A549 (cell line): ENCODE measurements at regions of chr10 and their contacts with region 1.

Region 1: DNA sequence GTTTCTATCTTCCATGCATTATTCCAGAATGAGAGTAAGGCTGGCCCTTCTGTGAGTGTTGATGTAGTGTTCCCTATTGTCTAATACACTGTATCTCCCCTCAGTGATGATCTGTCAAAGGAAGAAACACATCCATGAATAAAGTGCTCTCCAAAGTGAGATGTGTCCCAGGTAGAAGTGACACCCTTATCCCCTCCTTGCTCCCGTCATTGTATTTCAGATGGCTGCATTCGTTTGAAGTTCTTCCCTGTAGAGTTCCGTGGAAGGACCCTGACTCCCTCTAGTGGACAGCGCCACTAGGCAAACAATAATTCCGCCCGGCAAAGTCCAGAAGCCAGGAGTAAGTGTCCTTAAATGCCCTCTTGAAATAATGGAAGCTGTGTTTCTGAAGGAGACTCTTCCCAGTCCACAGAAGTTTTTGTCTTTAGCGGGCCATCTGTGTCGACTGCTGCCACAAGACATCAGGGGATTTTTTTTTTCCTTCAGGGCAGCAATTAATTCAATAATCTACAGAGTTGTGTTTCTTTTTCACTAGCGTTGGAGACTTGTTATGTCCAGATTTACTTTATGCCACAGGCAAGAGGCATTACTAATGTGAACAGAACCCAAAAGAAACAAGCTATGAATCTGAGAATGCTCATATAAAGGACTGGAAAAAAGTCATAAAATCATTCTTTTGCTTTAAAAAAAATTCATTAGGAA is 64.6 kb downstream of the THNSL1 start:
- DNase-seq: peak; percentile 79 to 86
- ATAC-seq: peak; percentile 84 to 93
- H3K4me3 ChIP-seq: no peak overlapping the region
- H3K27ac ChIP-seq: peak overlapping the region; percentile 48 to 69; a peak in 4 of 6 replicates
- H3K4me1 ChIP-seq: peaks cover 53% of the 10 kb centered on the region
- CTCF ChIP-seq: peak; percentile 94
- EP300 ChIP-seq: no peak
- POLR2A ChIP-seq: no peak
- RAD21 ChIP-seq: peak; percentile 96 to 97

Region 2: DNA sequence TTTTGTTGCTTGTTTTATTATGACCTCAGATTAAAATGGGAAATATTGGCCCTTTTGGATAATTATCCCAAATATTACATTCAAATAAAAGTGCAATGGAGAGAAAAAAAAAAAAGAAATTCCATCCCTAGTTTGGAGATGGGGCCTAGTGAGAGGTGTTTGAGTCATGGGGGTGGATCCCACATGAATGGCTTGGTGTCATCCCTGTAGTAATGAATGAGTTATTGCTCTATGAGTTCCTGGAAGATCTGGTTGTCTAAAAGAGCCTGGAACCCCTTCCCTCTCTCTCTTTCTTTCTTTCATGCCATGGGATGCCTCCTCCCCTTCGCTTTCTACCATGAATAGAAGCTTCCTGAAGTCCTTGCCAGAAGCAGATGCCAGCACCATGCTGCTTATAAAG is 1941.4 kb before region 1 on chr10:
- CTCF ChIA-PET with region 1: no interaction called
- POLR2A ChIA-PET with region 1: no interaction called
- DNase-seq: no peak
- ATAC-seq: no peak
- H3K4me3 ChIP-seq: no peak overlapping the region
- H3K27ac ChIP-seq: no peak overlapping the region
- H3K4me1 ChIP-seq: no peaks in the 10 kb centered on the region
- CTCF ChIP-seq: no peak
- EP300 ChIP-seq: no peak
- POLR2A ChIP-seq: no peak
- RAD21 ChIP-seq: no peak

Region 3: DNA sequence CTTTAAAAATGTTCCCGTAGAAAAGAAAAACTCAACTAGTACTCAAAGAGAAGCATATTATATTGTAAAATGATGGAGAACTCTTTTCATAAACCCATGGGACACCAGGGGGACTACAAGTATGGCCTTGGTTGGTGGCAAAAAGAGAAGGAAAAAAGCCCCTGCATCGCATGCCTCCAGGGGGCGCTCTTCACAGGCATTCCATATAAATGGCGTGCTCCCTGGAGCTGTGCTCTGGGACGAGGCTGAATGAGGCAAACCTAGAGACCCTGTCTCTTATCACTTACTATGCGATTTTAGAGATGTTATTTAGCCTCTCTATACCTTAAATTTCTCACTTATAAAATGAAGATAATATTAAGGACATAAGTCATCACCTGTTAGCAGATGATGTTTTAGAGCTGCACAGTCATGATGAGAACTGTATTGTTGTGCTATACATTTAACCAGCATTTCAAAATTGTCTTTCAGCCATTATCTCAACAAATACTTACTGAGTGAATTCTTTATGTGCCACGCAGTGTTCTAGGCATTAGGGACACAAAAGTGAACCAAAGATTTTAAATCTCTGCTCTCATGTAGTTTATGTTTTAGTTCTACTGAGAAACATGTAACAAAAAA is 463.1 kb before region 1 on chr10:
- CTCF ChIA-PET with region 1: interaction called, 19 read pairs
- POLR2A ChIA-PET with region 1: no interaction called
- DNase-seq: peak; percentile 45 to 78
- ATAC-seq: peak; percentile 88 to 95
- H3K4me3 ChIP-seq: no peak overlapping the region
- H3K27ac ChIP-seq: no peak overlapping the region
- H3K4me1 ChIP-seq: peaks cover 16% of the 10 kb centered on the region; the same call in 2 of the 3 replicates
- CTCF ChIP-seq: peak; percentile 87
- EP300 ChIP-seq: no peak
- POLR2A ChIP-seq: no peak
- RAD21 ChIP-seq: peak; percentile 46 to 63; a peak in 4 of 5 replicates

Region 4: GRCh38 chr10:24647981-24648380 is 433.1 kb before region 1 on chr10:
- CTCF ChIA-PET with region 1: interaction called, 23 read pairs
- POLR2A ChIA-PET with region 1: no interaction called
- DNase-seq: no peak
- ATAC-seq: no peak
- H3K4me3 ChIP-seq: no peak overlapping the region
- H3K27ac ChIP-seq: no peak overlapping the region
- H3K4me1 ChIP-seq: peaks cover 17% of the 10 kb centered on the region
- CTCF ChIP-seq: no peak
- EP300 ChIP-seq: no peak
- POLR2A ChIP-seq: no peak
- RAD21 ChIP-seq: no peak

Region 5: DNA sequence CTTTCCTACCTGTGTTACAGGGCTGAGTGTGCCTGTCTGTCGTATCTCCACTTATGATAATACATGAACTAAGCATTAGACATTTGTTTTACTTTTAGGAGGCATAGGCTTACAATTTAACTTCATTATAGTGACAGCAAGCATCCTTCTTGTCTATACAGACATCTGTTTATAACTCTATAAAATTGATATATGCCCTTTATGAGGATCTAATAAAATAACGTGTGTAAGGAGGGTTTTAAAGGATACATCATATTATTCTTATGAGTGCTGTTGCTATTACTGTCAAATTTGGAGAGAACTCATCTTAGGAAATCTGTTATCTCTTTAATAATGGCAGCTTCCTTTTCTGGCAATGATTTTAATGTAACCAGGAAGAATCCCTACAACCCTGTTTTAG is 42.7 kb before region 1 on chr10:
- CTCF ChIA-PET with region 1: interaction called, 13 read pairs
- POLR2A ChIA-PET with region 1: no interaction called
- DNase-seq: no peak
- ATAC-seq: no peak
- H3K4me3 ChIP-seq: no peak overlapping the region
- H3K27ac ChIP-seq: no peak overlapping the region
- H3K4me1 ChIP-seq: 0 out of 3 replicates have a peak, but pooled peaks cover 3% of the 10 kb centered on the region
- CTCF ChIP-seq: no peak
- EP300 ChIP-seq: no peak
- POLR2A ChIP-seq: no peak
- RAD21 ChIP-seq: no peak

Region 6: GRCh38 chr10:25059764-25060389 is 21.2 kb before region 1 on chr10:
- CTCF ChIA-PET with region 1: interaction called, 25 read pairs
- POLR2A ChIA-PET with region 1: no interaction called
- DNase-seq: peak; percentile 78 to 84
- ATAC-seq: peak; percentile 74 to 80
- H3K4me3 ChIP-seq: no peak overlapping the region
- H3K27ac ChIP-seq: peak overlapping the region; percentile 90 to 95
- H3K4me1 ChIP-seq: peaks cover 53% of the 10 kb centered on the region
- CTCF ChIP-seq: no peak
- EP300 ChIP-seq: peak in 1 of 2 experiments; percentile 42; a peak in 2 of 5 replicates
- POLR2A ChIP-seq: no peak
- RAD21 ChIP-seq: no peak

Region 7: DNA sequence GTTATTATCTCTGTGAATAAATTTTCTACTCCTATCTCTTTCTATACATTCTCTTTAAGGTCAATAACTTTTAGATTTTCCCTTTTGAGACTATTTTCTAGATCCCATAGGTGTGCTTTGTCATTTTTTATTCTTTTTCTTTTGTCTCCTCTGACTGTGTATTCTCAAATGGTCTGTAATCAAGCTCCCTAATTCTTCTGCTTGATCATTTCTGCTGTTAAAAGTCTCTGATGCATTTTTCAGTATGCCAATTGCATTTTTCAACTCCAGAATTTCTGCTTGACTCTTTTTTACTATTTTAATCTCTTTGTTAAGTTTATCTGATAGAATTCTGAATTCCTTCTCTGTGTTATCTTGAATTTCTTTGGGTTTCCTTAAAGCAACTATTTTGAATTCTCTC is 13.6 kb after region 1 on chr10:
- CTCF ChIA-PET with region 1: interaction called, 34 read pairs
- POLR2A ChIA-PET with region 1: no interaction called
- DNase-seq: no peak
- ATAC-seq: no peak
- H3K4me3 ChIP-seq: no peak overlapping the region
- H3K27ac ChIP-seq: no peak overlapping the region
- H3K4me1 ChIP-seq: no peaks in the 10 kb centered on the region
- CTCF ChIP-seq: no peak
- EP300 ChIP-seq: no peak
- POLR2A ChIP-seq: no peak
- RAD21 ChIP-seq: no peak